Naive thymus-derived CD4-positive, alpha-beta T cell (primary cell): ENCODE measurements at regions of chr3 and their contacts with region 1.

Region 1: GRCh38 chr3:45938864-45939263 is 4.4 kb upstream of the CXCR6 start:
- DNase-seq: peak; percentile 58 to 84 (median 79)
- ATAC-seq: peak; percentile 92
- H3K4me3 ChIP-seq: no peak overlapping the region
- H3K4me3 Mint-ChIP-seq: no peak overlapping the region
- H3K27ac ChIP-seq: no peak overlapping the region
- H3K27ac Mint-ChIP-seq: peak overlapping the region in 1 of 9 donors; percentile 3
- H3K4me1 ChIP-seq: peaks cover 15 to 32% of the 10 kb centered on the region in 2 donors
- H3K4me1 Mint-ChIP-seq: peaks cover 21 to 44% (median 30%) of the 10 kb centered on the region in 7 donors
- H3K27me3 ChIP-seq: no peaks in the 10 kb centered on the region
- H3K27me3 Mint-ChIP-seq: no peaks in the 10 kb centered on the region

Region 2: GRCh38 chr3:45923755-45924154 is 15.1 kb before region 1 on chr3:
- CTCF ChIA-PET with region 1: no interaction called
- POLR2A ChIA-PET with region 1: no interaction called
- intact Hi-C with region 1: no loop called
- DNase-seq: no peak
- ATAC-seq: no peak
- H3K4me3 ChIP-seq: no peak overlapping the region
- H3K4me3 Mint-ChIP-seq: no peak overlapping the region
- H3K27ac ChIP-seq: no peak overlapping the region
- H3K27ac Mint-ChIP-seq: peak overlapping the region in 2 of 9 donors; percentile 32 to 43
- H3K4me1 ChIP-seq: peaks cover 0 to 13% of the 10 kb centered on the region in 2 donors
- H3K4me1 Mint-ChIP-seq: peaks cover 3 to 32% (median 20%) of the 10 kb centered on the region in 7 donors
- H3K27me3 ChIP-seq: no peaks in the 10 kb centered on the region
- H3K27me3 Mint-ChIP-seq: no peaks in the 10 kb centered on the region

Region 3: GRCh38 chr3:45962033-45962432 is 23.2 kb after region 1 on chr3:
- CTCF ChIA-PET with region 1: no interaction called
- POLR2A ChIA-PET with region 1: no interaction called
- intact Hi-C with region 1: loop called in 1 of 2 experiments (anchors 2 kb)
- DNase-seq: no peak
- ATAC-seq: no peak
- H3K4me3 ChIP-seq: no peak overlapping the region
- H3K4me3 Mint-ChIP-seq: peak overlapping the region in 1 of 10 donors; percentile 31
- H3K27ac ChIP-seq: no peak overlapping the region
- H3K27ac Mint-ChIP-seq: peak overlapping the region in 1 of 9 donors; percentile 64
- H3K4me1 ChIP-seq: peaks cover 9 to 82% of the 10 kb centered on the region in 2 donors
- H3K4me1 Mint-ChIP-seq: peaks cover 6 to 75% (median 18%) of the 10 kb centered on the region in 7 donors
- H3K27me3 ChIP-seq: no peaks in the 10 kb centered on the region
- H3K27me3 Mint-ChIP-seq: no peaks in the 10 kb centered on the region

Region 4: DNA sequence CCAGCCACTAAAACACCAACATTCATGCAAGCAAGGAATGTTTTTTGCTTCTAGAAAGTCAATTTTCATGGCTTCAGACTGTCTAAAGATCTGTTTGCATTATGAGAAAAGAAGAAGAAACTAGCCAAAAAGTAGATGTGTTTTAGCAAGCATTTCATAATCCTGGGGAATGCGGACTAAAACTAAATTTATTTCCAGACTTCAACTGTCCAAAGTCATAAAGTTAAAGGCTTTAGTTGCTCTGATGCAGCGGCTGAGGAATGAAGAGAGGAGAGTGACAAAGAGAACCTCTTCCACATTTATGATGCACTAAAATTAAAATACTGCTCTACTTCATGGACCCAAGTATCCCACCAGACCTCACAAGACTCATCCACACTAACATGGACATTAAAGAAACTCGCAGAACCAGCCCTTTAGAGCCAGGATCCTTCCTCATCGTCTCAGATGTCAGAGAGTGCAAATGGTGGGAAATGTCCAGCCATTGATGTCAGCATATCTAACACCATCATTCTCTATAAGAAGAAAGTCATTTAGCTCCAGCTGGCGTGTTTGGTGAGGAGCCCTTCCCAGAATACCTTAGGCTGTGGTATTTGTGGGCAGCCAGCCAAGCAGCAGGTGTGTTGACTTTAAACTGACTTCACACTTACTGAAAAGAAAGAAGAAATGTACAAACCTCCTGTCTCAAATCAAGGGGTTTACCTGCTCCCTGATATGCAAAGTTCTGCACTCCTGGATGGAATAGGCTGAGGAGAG is 39.3 kb after region 1 on chr3:
- CTCF ChIA-PET with region 1: interaction called, 5 read pairs
- POLR2A ChIA-PET with region 1: no interaction called
- intact Hi-C with region 1: loop called (anchors 1 kb)
- DNase-seq: peak in 7 of 9 donors; percentile 23 to 57 (median 37)
- ATAC-seq: no peak
- H3K4me3 ChIP-seq: no peak overlapping the region
- H3K4me3 Mint-ChIP-seq: peak overlapping the region; percentile 43 to 87 (median 70)
- H3K27ac ChIP-seq: peak overlapping the region; percentile 32
- H3K27ac Mint-ChIP-seq: peak overlapping the region; percentile 68 to 94 (median 85)
- H3K4me1 ChIP-seq: peaks cover 36 to 92% of the 10 kb centered on the region in 2 donors
- H3K4me1 Mint-ChIP-seq: peaks cover 30 to 86% (median 53%) of the 10 kb centered on the region in 7 donors
- H3K27me3 ChIP-seq: no peaks in the 10 kb centered on the region
- H3K27me3 Mint-ChIP-seq: no peaks in the 10 kb centered on the region

Region 5: GRCh38 chr3:46208167-46208704 is 269.4 kb after region 1 on chr3 and contains the start of gene CCR1:
- CTCF ChIA-PET with region 1: no interaction called
- POLR2A ChIA-PET with region 1: no interaction called
- intact Hi-C with region 1: loop called in 1 of 2 experiments (anchors 2 kb)
- DNase-seq: peak in 2 of 9 donors; percentile 0 to 64
- ATAC-seq: peak; percentile 72
- H3K4me3 ChIP-seq: no peak within 1 kb of the TSS
- H3K4me3 Mint-ChIP-seq: peak within 1 kb of the TSS in 4 of 10 donors; percentile 8 to 72 (median 41)
- H3K27ac ChIP-seq: no peak within 1 kb of the TSS
- H3K27ac Mint-ChIP-seq: peak within 1 kb of the TSS in 8 of 9 donors; percentile 5 to 93 (median 57)
- H3K4me1 ChIP-seq: peaks cover 13 to 44% of the 10 kb centered on the region in 2 donors
- H3K4me1 Mint-ChIP-seq: peaks cover 8 to 64% (median 24%) of the 10 kb centered on the region in 7 donors
- H3K27me3 ChIP-seq: no peaks in the 10 kb centered on the region
- H3K27me3 Mint-ChIP-seq: peaks cover 0 to 2% (median 0%) of the 10 kb centered on the region in 5 donors
- total RNA-seq, gene CCR1: 2.2 to 27.6 (median 4.5) TPM

Region 6: DNA sequence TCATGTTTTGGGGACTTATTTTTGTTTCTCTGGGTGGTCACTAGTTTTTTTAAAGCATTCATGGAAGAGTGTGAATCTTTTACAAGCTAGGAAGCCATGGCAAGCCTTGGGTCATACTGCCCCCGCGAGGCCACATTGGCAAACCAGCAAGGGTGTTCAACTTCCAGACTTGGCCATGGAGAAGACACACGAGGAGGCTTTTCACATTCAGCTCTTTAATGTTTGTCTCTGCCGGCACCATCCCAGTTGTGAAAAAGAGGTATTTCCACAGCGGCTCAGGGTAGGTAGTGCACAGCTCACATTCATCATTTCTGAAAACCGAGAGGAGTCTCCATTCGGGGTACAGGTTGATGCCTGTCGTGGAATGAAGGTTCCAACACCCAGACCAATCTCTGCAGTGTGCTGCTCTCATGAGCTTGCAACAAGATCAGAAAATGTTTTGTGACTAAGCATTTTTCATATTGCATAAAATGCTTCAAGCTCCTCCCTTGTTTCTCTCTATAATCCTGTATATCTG is 439.6 kb after region 1 on chr3:
- CTCF ChIA-PET with region 1: interaction called, 3 read pairs
- POLR2A ChIA-PET with region 1: no interaction called
- intact Hi-C with region 1: loop called (anchors 2 kb)
- DNase-seq: peak; percentile 24 to 67 (median 46)
- ATAC-seq: peak; percentile 68
- H3K4me3 ChIP-seq: no peak overlapping the region
- H3K4me3 Mint-ChIP-seq: peak overlapping the region in 1 of 10 donors; percentile 8
- H3K27ac ChIP-seq: no peak overlapping the region
- H3K27ac Mint-ChIP-seq: peak overlapping the region in 2 of 9 donors; percentile 0 to 4
- H3K4me1 ChIP-seq: peaks cover 3 to 40% of the 10 kb centered on the region in 2 donors
- H3K4me1 Mint-ChIP-seq: peaks cover 23 to 48% (median 43%) of the 10 kb centered on the region in 7 donors
- H3K27me3 ChIP-seq: no peaks in the 10 kb centered on the region
- H3K27me3 Mint-ChIP-seq: peaks cover 0 to 24% (median 0%) of the 10 kb centered on the region in 5 donors